ENCODE measurements at regions of chr3 and their contacts with region 1.

Region 1: DNA sequence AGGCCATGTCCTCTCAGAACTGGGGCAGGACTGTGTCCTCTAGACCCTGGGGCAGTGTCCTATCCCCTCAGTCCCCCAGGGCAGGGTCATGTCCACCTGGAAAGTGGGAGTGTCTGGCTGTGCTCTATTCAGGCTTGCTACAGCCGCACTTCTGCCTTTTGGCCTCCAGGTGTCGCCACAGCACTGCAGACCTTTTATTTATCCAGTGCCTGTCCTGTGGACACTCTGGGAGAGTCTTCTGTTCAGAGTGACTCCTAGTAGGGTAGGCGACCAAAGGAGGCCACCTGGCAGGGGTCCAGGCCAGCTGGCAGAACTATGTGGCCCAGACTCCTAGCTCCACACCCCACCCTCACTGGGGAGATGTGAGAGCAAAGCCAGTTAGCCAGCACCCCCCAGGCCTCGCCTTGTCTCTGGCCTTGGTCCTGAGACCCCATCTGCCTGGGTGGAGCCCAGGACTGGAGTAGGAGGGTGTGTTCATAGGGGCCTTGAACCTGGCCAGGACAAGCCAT is 3.9 kb downstream of the TMIE start:
- DNase-seq: peak; percentile 53
- H3K4me3 Mint-ChIP-seq: no peak overlapping the region
- H3K27ac Mint-ChIP-seq: no peak overlapping the region
- H3K4me1 Mint-ChIP-seq: peaks cover 4% of the 10 kb centered on the region
- H3K27me3 Mint-ChIP-seq: peaks cover 15% of the 10 kb centered on the region

Region 2: GRCh38 chr3:46449755-46450552 is 255.1 kb before region 1 on chr3:
- intact Hi-C with region 1: no loop called
- DNase-seq: no peak
- H3K4me3 Mint-ChIP-seq: no peak overlapping the region
- H3K27ac Mint-ChIP-seq: no peak overlapping the region
- H3K4me1 Mint-ChIP-seq: no peaks in the 10 kb centered on the region
- H3K27me3 Mint-ChIP-seq: peaks cover 32% of the 10 kb centered on the region

Region 3: DNA sequence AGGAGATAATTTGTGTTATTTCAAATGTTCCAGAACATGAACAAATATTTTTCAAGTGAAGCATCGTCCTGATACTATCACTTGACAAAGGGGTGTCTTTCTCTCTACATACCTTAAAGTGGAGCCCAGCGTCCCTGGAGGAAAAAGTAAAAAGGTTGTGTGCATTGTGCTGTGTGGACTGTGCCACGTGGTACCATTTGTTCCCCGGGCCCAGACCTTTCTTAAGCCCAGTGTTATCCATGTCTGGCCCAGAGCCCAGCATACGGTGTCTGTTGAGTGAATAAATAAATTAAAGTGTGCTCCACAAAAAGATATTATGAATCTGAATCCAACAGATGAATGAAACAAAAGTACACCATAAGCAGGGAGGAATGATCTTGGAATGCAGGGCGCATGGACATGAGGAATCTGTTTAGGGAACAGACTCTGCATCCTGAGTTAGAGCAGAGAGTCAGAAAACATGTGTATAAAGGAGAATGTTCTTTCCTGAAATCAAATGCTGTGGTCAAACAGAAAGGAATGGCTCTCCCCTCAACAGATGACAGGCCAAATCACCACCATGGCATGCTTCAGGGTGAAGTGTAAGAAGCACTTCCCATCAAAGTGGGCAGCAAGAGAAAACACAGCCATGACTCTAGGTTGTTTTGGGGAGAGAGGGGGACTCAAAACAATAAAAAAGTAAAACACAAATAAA is 20.7 kb after region 1 on chr3:
- intact Hi-C with region 1: no loop called
- DNase-seq: no peak
- H3K4me3 Mint-ChIP-seq: no peak overlapping the region
- H3K27ac Mint-ChIP-seq: no peak overlapping the region
- H3K4me1 Mint-ChIP-seq: no peaks in the 10 kb centered on the region
- H3K27me3 Mint-ChIP-seq: peaks cover 5% of the 10 kb centered on the region

Region 4: DNA sequence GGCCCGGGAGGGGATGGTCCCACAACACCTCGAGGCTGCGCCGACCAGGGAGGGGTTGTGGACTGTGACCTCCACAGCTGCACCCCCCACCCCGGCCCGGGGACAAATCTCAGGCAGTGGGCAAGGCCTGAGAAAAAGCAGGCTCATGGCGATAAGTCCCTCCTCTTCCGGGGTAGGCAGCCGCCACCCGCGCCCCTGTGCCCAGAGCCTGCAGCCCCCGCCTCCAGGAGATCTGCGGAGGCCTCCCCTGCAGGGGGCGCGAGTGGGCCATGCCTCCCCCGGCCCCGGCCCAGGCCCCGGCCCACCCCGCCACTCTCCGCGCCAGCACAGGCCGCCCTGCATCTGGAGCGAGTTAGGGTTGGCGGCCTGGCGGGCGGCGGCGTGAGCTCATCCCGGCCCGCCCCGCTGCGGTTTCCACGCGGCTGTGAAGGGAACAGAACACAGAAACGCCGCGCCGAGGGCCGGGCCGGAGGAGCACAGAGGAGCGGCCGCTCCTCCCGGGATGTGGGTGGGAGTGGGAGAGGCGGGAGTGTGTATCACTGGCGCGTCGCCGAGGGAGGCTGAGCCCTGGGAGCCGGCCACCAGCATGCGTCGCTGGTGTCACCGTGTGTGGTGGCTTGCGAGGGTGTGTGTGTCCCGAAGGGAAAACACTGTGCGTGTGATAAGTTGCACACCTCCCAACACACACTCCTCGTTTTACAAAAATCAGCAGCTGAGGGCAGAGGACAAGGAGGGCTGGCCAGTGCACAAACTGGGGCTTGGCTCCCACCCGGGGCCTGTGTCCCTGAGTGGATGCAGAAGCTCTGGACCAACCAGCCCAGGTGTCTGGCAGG is 140.9 kb after region 1 on chr3:
- intact Hi-C with region 1: loop called (anchors 1 kb)
- DNase-seq: peak; percentile 56
- H3K4me3 Mint-ChIP-seq: peak overlapping the region; percentile 47
- H3K27ac Mint-ChIP-seq: no peak overlapping the region
- H3K4me1 Mint-ChIP-seq: no peaks in the 10 kb centered on the region
- H3K27me3 Mint-ChIP-seq: peaks cover 41% of the 10 kb centered on the region

Region 5: GRCh38 chr3:46895204-46895660 is 190.2 kb after region 1 on chr3:
- intact Hi-C with region 1: loop called (anchors 1 kb)
- DNase-seq: peak; percentile 61
- H3K4me3 Mint-ChIP-seq: no peak overlapping the region
- H3K27ac Mint-ChIP-seq: no peak overlapping the region
- H3K4me1 Mint-ChIP-seq: peaks cover 4% of the 10 kb centered on the region
- H3K27me3 Mint-ChIP-seq: peaks cover 55% of the 10 kb centered on the region

Region 6: GRCh38 chr3:46998121-46998851 is 293.2 kb after region 1 on chr3:
- intact Hi-C with region 1: loop called (anchors 1 kb)
- DNase-seq: peak; percentile 47
- H3K4me3 Mint-ChIP-seq: no peak overlapping the region
- H3K27ac Mint-ChIP-seq: no peak overlapping the region
- H3K4me1 Mint-ChIP-seq: peaks cover 7% of the 10 kb centered on the region
- H3K27me3 Mint-ChIP-seq: no peaks in the 10 kb centered on the region

Region 7: DNA sequence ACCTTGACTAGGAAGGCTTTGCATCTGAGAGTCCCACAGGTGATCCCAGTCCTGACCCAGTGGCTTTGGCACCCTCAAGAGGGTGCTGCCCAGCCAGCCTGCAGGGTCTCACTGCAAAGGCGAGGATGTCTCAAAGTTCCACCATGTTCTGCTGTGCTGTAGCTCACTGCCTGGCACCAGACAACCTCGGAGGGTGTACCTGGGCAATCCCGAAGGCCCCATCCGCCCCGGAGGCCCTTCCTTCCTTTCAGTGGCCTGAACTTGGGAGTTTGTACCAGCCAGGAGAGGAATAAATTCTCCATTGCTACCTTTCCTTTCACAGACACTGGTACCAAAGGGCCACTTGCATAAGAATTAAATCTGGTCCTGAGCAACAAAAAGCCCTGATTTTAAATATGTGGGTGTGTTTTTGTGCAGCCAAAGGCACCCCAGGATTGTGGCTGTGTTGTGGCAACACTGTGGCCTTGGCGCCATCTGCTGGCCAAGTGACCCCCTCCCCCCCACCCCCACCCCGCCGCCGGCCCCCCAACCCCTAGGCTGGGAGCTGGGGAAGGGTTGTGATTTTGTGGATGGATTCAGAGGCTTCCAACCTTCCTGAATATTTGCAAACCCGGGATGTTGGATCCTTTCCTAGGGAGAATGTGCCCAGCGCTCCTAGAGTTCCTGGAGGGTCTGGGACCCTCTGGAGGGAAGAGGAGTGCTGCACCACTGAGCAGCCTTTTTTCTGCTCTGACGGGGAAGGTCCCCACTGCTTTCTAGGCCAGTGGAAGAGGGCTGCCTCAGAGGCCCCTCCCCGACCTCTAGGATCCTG is 666.0 kb after region 1 on chr3:
- intact Hi-C with region 1: loop called (anchors 1 kb)
- DNase-seq: no peak
- H3K4me3 Mint-ChIP-seq: no peak overlapping the region
- H3K27ac Mint-ChIP-seq: no peak overlapping the region
- H3K4me1 Mint-ChIP-seq: no peaks in the 10 kb centered on the region
- H3K27me3 Mint-ChIP-seq: peaks cover 15% of the 10 kb centered on the region

Measured in activated T-helper 1 cell treated with anti-CD3 and anti-CD28 coated beads, Interleukin-12 subunit alpha, Interleukin-12 subunit beta, Interleukin-2, Interleukin-4 antibody, amounts not matched to agents 30 ng/mL and 10 ng/mL and 1 ng/mL, durations not matched to agents 14 hours and 24 hours and 36 hours (primary cell).